Activated T-helper 1 cell treated with anti-CD3 and anti-CD28 coated beads, Interleukin-12 subunit alpha, Interleukin-12 subunit beta, Interleukin-2, Interleukin-4 antibody, amounts not matched to agents 30 ng/mL and 10 ng/mL and 1 ng/mL, durations not matched to agents 14 hours and 24 hours and 36 hours (primary cell): ENCODE measurements at regions of chr17 and their contacts with region 1.

Region 1: GRCh38 chr17:19004421-19005136 is at the start of gene FAM83G:
- DNase-seq: peak; percentile 76
- H3K4me3 Mint-ChIP-seq: peak within 1 kb of the TSS; percentile 91
- H3K27ac Mint-ChIP-seq: peak within 1 kb of the TSS; percentile 84
- H3K4me1 Mint-ChIP-seq: peaks cover 22% of the 10 kb centered on the region
- H3K27me3 Mint-ChIP-seq: peaks cover 9% of the 10 kb centered on the region
- total RNA-seq, gene FAM83G: 13.0 and 13.2 TPM in 2 replicates

Region 2: DNA sequence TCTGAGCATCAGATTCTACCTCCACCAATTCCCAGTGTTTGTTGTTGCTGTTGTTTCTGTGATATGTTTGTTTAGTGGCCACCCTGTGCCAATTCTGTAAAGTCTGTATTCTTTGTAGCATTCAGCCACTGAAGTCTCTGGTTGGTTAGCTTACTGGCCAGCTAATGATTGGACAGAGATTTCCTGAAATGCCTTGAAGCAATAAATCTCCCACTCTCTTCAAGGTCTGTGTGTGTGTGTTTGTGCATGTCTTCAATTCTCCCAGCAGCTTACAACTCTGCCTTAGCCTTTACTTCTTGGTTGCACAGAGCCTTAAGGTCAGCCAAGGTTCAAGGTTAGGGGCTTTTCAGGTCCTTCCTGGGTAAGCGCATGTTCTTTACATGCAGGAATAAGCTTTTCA is 108.4 kb before region 1 on chr17:
- intact Hi-C with region 1: loop called (anchors 1 kb)
- DNase-seq: no peak
- H3K4me3 Mint-ChIP-seq: no peak overlapping the region
- H3K27ac Mint-ChIP-seq: no peak overlapping the region
- H3K4me1 Mint-ChIP-seq: peaks cover 12% of the 10 kb centered on the region
- H3K27me3 Mint-ChIP-seq: no peaks in the 10 kb centered on the region

Region 3: DNA sequence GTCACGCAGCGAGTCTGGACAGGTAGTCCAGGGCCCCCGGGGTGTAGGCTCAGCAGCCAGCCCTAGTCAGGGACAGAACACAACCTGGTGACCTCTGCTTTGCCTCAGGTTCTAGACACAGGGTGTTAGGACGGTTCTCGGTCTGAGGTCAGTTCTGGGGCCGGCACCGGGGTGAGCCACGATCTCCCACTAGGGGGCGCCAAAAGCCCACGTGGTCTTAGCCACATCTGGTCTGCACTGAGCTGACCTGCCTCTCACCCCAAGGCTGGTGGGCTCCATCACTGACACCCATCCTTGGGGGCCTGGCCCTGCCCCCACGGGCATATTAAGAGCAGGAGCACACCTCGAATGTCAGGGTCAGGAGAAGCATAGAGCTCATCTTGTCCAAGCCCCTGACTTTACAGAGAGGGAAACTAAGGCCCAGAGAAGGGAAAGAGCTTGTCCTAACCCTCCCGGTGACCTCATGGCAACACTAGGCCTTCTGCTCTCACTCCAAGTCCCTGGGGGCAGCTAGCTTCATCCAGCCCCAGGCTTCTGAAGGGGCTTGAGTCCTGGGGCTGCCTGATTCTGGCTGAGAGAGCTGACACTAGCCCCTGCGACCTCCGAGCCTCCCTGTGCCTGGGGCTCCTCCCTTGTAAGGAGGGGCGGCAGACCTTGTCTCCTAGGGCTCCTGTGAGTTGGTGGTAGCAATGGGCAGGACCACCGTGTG is 43.6 kb before region 1 on chr17:
- intact Hi-C with region 1: loop called (anchors 5 kb)
- DNase-seq: peak; percentile 68
- H3K4me3 Mint-ChIP-seq: no peak overlapping the region
- H3K27ac Mint-ChIP-seq: peak overlapping the region; percentile 38
- H3K4me1 Mint-ChIP-seq: peaks cover 17% of the 10 kb centered on the region
- H3K27me3 Mint-ChIP-seq: no peaks in the 10 kb centered on the region

Region 4: GRCh38 chr17:18992454-18993130 is 12.0 kb before region 1 on chr17:
- intact Hi-C with region 1: no loop called
- DNase-seq: no peak
- H3K4me3 Mint-ChIP-seq: no peak overlapping the region
- H3K27ac Mint-ChIP-seq: no peak overlapping the region
- H3K4me1 Mint-ChIP-seq: peaks cover 13% of the 10 kb centered on the region
- H3K27me3 Mint-ChIP-seq: no peaks in the 10 kb centered on the region

Region 5: GRCh38 chr17:19237389-19238166 is 233.0 kb after region 1 on chr17:
- intact Hi-C with region 1: no loop called
- DNase-seq: peak; percentile 30
- H3K4me3 Mint-ChIP-seq: peak overlapping the region; percentile 84
- H3K27ac Mint-ChIP-seq: peak overlapping the region; percentile 34
- H3K4me1 Mint-ChIP-seq: no peaks in the 10 kb centered on the region
- H3K27me3 Mint-ChIP-seq: peaks cover 18% of the 10 kb centered on the region

Region 6: DNA sequence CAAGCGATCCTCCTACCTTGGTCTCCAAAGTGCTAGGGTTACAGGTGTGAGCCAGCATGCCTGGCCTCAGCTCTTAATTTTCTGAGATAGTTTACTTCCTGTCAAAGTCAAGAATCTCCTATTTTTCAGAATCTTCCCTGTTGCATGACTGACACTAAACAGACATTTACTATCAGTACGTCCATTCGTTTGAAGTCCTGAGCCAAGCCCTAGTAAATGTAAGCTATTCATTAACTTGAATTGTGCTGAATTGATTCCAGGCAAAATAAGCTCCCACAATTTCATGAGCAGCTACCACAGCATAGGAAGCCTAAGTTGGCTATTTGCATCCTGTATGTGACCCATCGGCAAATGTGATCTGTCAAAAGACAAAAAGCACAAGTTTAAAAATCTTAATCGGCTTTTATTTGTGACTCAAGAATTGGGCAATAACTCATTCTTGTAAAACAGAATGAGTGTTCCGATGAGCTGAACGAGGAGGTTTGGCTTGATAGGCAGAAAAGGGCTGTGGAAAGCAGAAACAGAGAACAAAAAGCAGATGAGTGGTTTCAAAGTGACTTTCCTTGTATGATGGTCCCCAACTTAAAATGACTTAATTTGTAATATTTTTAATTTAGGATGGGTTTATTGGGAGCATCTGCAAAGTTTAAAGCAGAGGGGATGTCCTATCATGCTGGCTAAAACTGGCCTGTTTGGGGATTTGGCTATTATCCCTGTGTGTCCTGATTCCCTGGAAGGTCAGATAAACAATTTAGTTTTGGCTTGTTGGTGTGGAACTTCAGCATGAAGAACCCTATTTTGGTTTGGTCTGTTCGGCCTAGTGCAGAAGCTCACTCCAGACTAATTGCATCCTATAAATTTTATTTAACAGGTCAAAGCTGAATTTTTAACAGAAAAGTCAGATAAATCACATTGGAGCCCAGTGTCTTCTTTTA is 420.6 kb after region 1 on chr17:
- intact Hi-C with region 1: no loop called
- DNase-seq: no peak
- H3K4me3 Mint-ChIP-seq: no peak overlapping the region
- H3K27ac Mint-ChIP-seq: no peak overlapping the region
- H3K4me1 Mint-ChIP-seq: no peaks in the 10 kb centered on the region
- H3K27me3 Mint-ChIP-seq: peaks cover 6% of the 10 kb centered on the region